ENCODE measurements at regions of chr17 and their contacts with region 1.

Region 1: DNA sequence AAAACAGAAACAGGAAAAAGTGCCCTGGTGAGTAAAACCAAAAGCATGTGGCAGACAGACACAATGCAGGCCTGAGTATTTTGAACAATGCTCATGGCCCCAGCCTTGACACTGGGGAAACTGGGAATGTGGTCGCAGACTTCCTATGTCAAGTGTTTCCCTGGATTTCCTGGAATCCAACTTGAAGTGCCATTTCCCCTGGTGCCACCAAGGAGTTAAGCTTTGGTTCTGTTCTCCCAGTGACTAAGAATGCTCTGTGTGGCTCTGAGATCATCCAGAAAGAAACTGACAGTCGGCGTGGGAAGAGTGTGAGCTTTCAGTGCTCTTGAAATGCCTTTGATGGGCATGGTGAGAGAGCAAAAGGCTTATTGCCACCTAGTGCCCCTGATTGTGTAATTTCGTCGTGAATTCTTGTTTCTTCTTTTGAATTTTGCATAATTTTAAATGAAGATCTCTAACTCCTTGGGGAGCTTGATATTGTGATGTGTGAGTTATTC is 96.0 kb downstream of the YPEL2 start:
- DNase-seq: peak in 7 of 10 donors; percentile 55 to 81 (median 65)
- H3K4me3 ChIP-seq: peak overlapping the region in 17 of 59 donors; percentile 1 to 39 (median 10)
- H3K27ac ChIP-seq: peak overlapping the region; percentile 57 to 96 (median 90)
- H3K27me3 ChIP-seq: no peaks in the 10 kb centered on the region
- CTCF ChIP-seq: peak in 42 of 56 donors; percentile 7 to 63 (median 37)

Region 2: GRCh38 chr17:59366773-59367657 is 60.5 kb before region 1 on chr17:
- intact Hi-C with region 1: loop called in 1 of 2 experiments (anchors 5 kb)
- DNase-seq: peak in 1 of 10 donors; percentile 67
- H3K4me3 ChIP-seq: peak overlapping the region in 25 of 59 donors; percentile 1 to 39 (median 25)
- H3K27ac ChIP-seq: peak overlapping the region; percentile 90 to 100 (median 99)
- H3K27me3 ChIP-seq: no peaks in the 10 kb centered on the region
- CTCF ChIP-seq: no peak

Region 3: GRCh38 chr17:59378458-59379074 is 48.9 kb before region 1 on chr17:
- intact Hi-C with region 1: loop called in 1 of 2 experiments (anchors 5 kb)
- DNase-seq: no peak
- H3K4me3 ChIP-seq: no peak overlapping the region
- H3K27ac ChIP-seq: peak overlapping the region; percentile 19 to 100 (median 99)
- H3K27me3 ChIP-seq: no peaks in the 10 kb centered on the region
- CTCF ChIP-seq: no peak

Region 4: GRCh38 chr17:59527325-59527917 is 99.9 kb after region 1 on chr17:
- intact Hi-C with region 1: no loop called
- DNase-seq: no peak
- H3K4me3 ChIP-seq: no peak overlapping the region
- H3K27ac ChIP-seq: peak overlapping the region in 30 of 59 donors; percentile 3 to 73 (median 42)
- H3K27me3 ChIP-seq: no peaks in the 10 kb centered on the region
- CTCF ChIP-seq: no peak

Region 5: DNA sequence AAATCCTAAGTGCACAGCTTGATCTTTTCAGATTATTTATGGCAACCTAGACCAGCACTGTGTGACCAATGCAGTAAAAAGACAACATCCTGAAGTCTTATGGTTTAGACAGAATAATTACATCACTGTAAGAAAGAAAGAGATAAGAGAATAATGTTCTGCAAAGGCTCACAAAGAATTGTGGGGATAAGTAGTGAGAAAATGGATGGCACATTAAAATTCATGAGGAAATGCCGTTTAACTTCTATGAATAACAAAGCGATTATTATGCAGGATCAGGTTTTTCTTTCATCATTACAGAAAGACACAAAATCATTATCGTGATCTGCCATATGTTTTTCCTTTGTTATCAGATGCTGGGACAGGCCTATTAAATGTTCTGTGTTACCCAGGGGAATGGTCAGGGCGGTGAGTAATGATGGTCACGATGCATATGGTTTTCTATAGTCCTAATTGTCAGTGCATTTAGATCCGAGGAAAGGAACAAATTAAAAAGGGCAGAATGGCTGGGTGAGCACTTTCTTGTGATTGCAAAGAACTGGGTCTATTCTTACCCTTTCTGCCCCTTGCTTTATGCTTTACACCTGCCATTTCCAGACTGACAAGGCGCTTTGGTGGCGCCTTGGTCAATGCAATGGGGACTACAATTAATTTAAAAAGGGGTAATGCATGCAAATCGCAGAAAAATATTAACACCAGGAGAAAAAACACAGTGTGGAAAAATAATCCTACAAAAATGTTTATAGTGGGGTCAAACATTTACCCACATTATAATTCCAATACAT is 119.8 kb after region 1 on chr17:
- intact Hi-C with region 1: no loop called
- DNase-seq: no peak
- H3K4me3 ChIP-seq: peak overlapping the region in 2 of 59 donors; percentile 4 to 17
- H3K27ac ChIP-seq: peak overlapping the region in 1 of 59 donors; percentile 4
- H3K27me3 ChIP-seq: no peaks in the 10 kb centered on the region
- CTCF ChIP-seq: no peak

Measured in dorsolateral prefrontal cortex (tissue), 120 donors.